Calu3 (cell line): ENCODE measurements at regions of chr1 and their contacts with region 1.

Region 1: GRCh38 chr1:81305997-81306452 is 494.7 kb upstream of the ADGRL2 start:
- DNase-seq: peak; percentile 11
- H3K4me3 Mint-ChIP-seq: no peak overlapping the region
- H3K27ac Mint-ChIP-seq: no peak overlapping the region
- H3K4me1 Mint-ChIP-seq: no peaks in the 10 kb centered on the region
- H3K27me3 Mint-ChIP-seq: no peaks in the 10 kb centered on the region
- CTCF ChIP-seq: no peak

Region 2: DNA sequence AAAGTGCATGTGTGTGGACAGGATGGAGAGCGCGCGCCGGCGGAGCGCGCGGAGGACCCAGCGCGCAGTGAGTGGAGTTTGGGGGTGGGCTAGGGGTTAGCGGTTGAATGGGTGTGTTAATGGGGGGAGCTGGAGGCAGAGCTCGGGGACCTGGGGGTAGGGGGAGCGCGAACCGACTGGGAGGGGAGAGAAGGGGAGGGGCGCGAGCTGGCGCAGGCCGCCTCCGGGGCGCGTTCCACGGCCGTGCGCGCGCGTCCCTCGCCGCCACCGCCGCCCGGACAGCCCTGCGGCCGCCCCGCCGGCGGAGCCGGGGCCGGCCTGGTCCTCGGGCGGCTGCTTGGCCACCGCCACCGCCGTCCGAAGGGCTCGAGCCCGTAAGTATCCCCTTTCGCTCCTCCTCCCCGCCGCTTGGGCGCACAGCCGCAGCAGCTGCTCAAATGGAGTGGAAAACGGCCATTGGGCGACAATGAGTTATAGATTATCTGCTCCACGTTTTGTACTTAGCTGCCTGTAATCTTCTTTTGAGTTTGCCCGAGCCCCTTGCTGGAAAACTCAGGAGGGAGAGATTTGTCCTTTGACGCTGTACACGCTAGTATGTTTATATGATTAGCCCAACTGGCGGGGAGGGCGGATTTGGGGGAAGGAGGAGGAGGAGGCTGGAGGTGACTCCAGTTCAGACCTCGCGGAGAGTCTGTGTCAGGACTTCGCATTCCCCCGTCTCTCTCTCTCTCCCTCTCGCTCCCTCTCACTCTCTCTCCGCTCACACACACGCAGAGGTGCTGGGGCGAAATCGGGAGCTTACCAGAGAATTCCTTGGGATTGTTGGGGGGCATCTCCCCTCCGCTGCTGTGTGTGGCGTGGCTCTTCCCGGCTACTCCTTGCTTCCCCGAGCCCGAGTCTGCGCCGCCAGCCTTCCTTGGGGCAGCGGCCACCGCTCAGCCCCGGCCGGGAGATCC is 494.9 kb after region 1 on chr1 and contains the start of gene ADGRL2:
- CTCF ChIA-PET with region 1: no interaction called
- intact Hi-C with region 1: loop called (anchors 10 kb)
- DNase-seq: peak; percentile 77
- H3K4me3 Mint-ChIP-seq: peak within 1 kb of the TSS; percentile 91
- H3K27ac Mint-ChIP-seq: peak within 1 kb of the TSS; percentile 61
- H3K4me1 Mint-ChIP-seq: peaks cover 6% of the 10 kb centered on the region
- H3K27me3 Mint-ChIP-seq: no peaks in the 10 kb centered on the region
- CTCF ChIP-seq: no peak
- total RNA-seq, gene ADGRL2: 58.8 and 72.3 TPM in 2 replicates